ENCODE measurements at regions of chrX and their contacts with region 1.

Region 1: GRCh38 chrX:154397819-154398724 is at the start of gene RPL10:
- DNase-seq: peak; percentile 89 to 98 (median 94)
- ATAC-seq: peak; percentile 69
- H3K4me3 ChIP-seq: peak within 1 kb of the TSS; percentile 76
- H3K27ac ChIP-seq: peak within 1 kb of the TSS; percentile 97
- H3K4me1 ChIP-seq: peaks cover 5 to 18% of the 10 kb centered on the region in 2 experiments; a peak in 3 of 5 replicates
- H3K27me3 ChIP-seq: no peaks in the 10 kb centered on the region
- CTCF ChIP-seq: 0 out of 6 replicates have a peak, but pooled peaks of 1 of the 3 experiments have one; percentile 19
- EP300 ChIP-seq: no peak
- POLR2A ChIP-seq: peak; percentile 100
- RAD21 ChIP-seq: no peak; a peak in 1 of 4 replicates
- polyA plus RNA-seq, gene RPL10: 5,014 to 7,600 TPM

Region 2: GRCh38 chrX:154370882-154371770 is 26.9 kb before region 1 on chrX:
- CTCF ChIA-PET with region 1: no interaction called
- POLR2A ChIA-PET with region 1: interaction called, 19 read pairs
- in situ Hi-C with region 1: no loop called
- intact Hi-C with region 1: no loop called
- DNase-seq: peak; percentile 73 to 97 (median 82)
- ATAC-seq: peak; percentile 84
- H3K4me3 ChIP-seq: peak overlapping the region; percentile 89
- H3K27ac ChIP-seq: peak overlapping the region; percentile 99
- H3K4me1 ChIP-seq: peaks cover 18 to 87% of the 10 kb centered on the region in 2 experiments
- H3K27me3 ChIP-seq: no peaks in the 10 kb centered on the region
- CTCF ChIP-seq: peak in 1 of 3 experiments; percentile 51; a peak in 2 of 6 replicates
- EP300 ChIP-seq: no peak
- POLR2A ChIP-seq: peak; percentile 99
- RAD21 ChIP-seq: no peak

Region 3: GRCh38 chrX:154411322-154411980 is 13.4 kb after region 1 on chrX and contains the start of gene TAFAZZIN:
- CTCF ChIA-PET with region 1: no interaction called
- POLR2A ChIA-PET with region 1: interaction called, 85 read pairs
- in situ Hi-C with region 1: no loop called
- intact Hi-C with region 1: no loop called
- DNase-seq: peak; percentile 77 to 85 (median 80)
- ATAC-seq: peak; percentile 69
- H3K4me3 ChIP-seq: peak within 1 kb of the TSS; percentile 74
- H3K27ac ChIP-seq: peak within 1 kb of the TSS; percentile 80
- H3K4me1 ChIP-seq: peaks cover 13 to 46% of the 10 kb centered on the region in 2 experiments; a peak in 4 of 5 replicates
- H3K27me3 ChIP-seq: no peaks in the 10 kb centered on the region
- CTCF ChIP-seq: no peak
- EP300 ChIP-seq: no peak
- POLR2A ChIP-seq: peak; percentile 88
- RAD21 ChIP-seq: no peak
- polyA plus RNA-seq, gene TAFAZZIN: 0.49 to 0.64 TPM

Region 4: GRCh38 chrX:154428176-154429010 is 30.3 kb after region 1 on chrX and contains the start of gene ATP6AP1:
- CTCF ChIA-PET with region 1: no interaction called
- POLR2A ChIA-PET with region 1: interaction called, 26 read pairs
- in situ Hi-C with region 1: no loop called
- intact Hi-C with region 1: no loop called
- DNase-seq: peak; percentile 85 to 95 (median 93)
- ATAC-seq: peak; percentile 97
- H3K4me3 ChIP-seq: peak within 1 kb of the TSS; percentile 79
- H3K27ac ChIP-seq: peak within 1 kb of the TSS; percentile 66
- H3K4me1 ChIP-seq: peaks cover 27 to 51% of the 10 kb centered on the region in 2 experiments; a peak in 4 of 5 replicates
- H3K27me3 ChIP-seq: no peaks in the 10 kb centered on the region
- CTCF ChIP-seq: peak in 2 of 3 experiments; percentile 17 to 20; a peak in 2 of 6 replicates
- EP300 ChIP-seq: no peak
- POLR2A ChIP-seq: peak; percentile 69
- RAD21 ChIP-seq: 0 out of 4 replicates have a peak, but pooled peaks of 1 of the 2 experiments have one; percentile 7
- polyA plus RNA-seq, gene ATP6AP1: 8.3 to 12.3 TPM

Region 5: DNA sequence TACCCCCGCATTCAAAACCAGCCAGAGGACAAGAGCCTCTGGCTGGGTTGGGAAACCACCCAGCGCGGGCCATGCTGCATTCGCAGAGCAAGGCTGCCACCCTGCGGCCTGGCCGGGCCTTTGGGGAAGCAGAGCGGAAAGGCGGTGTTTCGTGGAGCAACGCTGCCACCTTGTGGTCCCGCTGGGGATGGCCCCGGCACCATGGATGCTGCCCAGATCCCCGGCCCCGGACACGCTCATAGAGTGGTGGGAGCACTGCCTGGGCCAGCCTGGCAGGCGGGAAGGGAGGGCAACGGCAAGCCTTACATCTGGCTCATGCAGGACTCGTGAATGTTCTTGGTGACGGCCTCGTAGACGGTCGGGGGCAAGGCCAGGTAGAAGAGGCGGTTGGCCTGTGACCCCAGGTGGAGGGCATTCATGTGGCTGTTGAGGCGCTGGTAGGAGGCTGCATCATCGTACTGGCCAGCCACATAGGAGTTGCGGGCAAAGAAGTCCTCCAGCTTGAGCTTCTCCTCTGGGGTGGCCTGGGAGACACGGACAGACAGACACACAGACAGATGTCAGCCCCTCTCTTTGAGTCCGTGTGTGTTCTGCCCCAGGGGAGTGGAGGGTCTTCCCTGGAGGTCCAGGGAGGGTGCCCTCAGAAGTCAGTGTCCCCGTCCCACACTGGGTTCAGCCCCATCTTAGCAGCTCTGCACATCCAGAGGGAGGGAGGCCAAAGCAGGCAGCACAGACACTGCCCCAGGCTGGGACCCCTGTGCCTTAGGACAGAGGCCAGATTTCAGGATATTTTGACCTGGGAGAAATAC is 137.0 kb after region 1 on chrX:
- CTCF ChIA-PET with region 1: interaction called, 17 read pairs
- POLR2A ChIA-PET with region 1: interaction called, 35 read pairs
- in situ Hi-C with region 1: loop called (anchors 10 kb)
- intact Hi-C with region 1: no loop called
- DNase-seq: peak; percentile 75 to 89 (median 80)
- ATAC-seq: peak; percentile 93
- H3K4me3 ChIP-seq: no peak overlapping the region
- H3K27ac ChIP-seq: 0 out of 3 replicates have a peak overlapping the region, but pooled peaks have one; percentile 15
- H3K4me1 ChIP-seq: peaks cover 2 to 26% of the 10 kb centered on the region in 2 experiments; a peak in 3 of 5 replicates
- H3K27me3 ChIP-seq: no peaks in the 10 kb centered on the region
- CTCF ChIP-seq: peak; percentile 99 to 100 (median 99)
- EP300 ChIP-seq: 0 out of 2 replicates have a peak, but pooled peaks have one; percentile 43
- POLR2A ChIP-seq: 0 out of 2 replicates have a peak, but pooled peaks have one; percentile 13
- RAD21 ChIP-seq: peak; percentile 98 to 99

Measured in K562 (cell line).